Activated CD4-positive, alpha-beta memory T cell treated with anti-CD3 and anti-CD28 coated beads for 36 hours (primary cell): ENCODE measurements at regions of chr3 and their contacts with region 1.

Region 1: DNA sequence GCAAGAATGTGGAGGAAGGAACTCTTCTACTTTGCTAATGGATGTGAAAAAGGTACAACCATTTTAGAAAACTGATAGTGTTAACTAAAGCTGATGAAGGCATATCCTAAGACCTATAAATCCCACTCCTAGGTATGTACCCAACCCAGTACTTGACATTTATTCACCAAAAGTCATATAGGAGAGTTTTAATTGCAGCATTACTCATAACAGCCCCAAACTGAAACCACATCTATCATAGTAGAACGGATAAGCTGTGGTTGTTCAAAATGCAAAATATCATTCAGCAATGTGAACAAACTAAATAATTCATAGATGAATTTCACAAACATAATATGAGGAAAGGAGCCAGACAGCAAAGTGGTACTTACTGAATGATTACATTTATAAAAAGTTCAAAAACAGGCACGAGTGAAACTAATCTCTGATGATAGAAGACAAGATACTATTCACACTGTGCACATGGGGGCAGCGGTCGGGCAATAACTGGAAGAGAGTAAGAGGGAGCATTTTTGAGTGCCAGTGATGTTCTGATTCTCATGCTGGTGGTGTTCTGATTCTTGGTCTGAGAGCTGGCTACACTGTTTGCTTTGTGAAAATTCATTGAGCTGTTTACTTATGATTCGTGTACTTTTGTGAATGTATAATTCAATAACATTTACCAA is 34.3 kb downstream of the GOLIM4 start:
- DNase-seq: peak; percentile 11
- H3K4me3 Mint-ChIP-seq: no peak overlapping the region
- H3K27ac Mint-ChIP-seq: no peak overlapping the region
- H3K4me1 Mint-ChIP-seq: peaks cover 7% of the 10 kb centered on the region
- H3K27me3 Mint-ChIP-seq: peaks cover 4% of the 10 kb centered on the region

Region 2: DNA sequence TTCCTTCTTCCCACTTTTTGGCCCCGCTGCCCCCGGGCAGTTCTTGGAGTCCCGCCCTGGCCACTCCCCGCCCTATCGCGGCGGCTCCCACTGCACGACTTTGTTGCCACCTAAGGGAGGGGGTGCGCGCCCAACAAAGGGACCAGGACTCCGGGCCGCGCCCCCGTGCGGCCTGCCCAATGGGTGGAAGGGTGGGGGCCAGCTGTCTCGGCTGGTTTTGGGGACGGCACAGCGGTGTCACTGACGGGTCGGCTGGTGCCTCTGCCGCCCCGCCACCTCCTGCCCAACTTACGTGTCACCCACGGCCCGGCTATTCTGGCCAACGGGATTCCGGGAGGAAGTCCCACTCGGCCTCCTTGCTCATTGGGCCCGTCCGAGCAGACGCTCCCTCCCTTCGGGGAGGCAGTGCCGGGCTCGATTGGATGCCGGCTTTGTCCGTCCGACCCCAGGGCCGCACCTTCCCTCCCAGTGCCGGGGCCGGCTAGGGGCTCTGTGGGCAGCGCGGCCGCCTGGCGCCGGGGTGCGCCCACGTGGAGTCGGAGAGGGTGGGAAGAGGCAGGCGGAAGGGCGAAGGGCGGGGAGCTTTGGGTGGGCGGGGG is 34.2 kb after region 1 on chr3 and contains the start of gene GOLIM4:
- CTCF ChIA-PET with region 1: no interaction called
- POLR2A ChIA-PET with region 1: no interaction called
- intact Hi-C with region 1: loop called (anchors 5 kb)
- DNase-seq: peak; percentile 66
- H3K4me3 Mint-ChIP-seq: peak within 1 kb of the TSS; percentile 67
- H3K27ac Mint-ChIP-seq: no peak within 1 kb of the TSS
- H3K4me1 Mint-ChIP-seq: peaks cover 10% of the 10 kb centered on the region
- H3K27me3 Mint-ChIP-seq: peaks cover 39% of the 10 kb centered on the region
- total RNA-seq, gene GOLIM4: 1.4 to 1.5 TPM